ENCODE measurements at regions of chr6 and their contacts with region 1.

Region 1: GRCh38 chr6:153023977-153024708 is 21.6 kb upstream of the MTRF1L start:
- DNase-seq: peak; percentile 84
- H3K4me3 Mint-ChIP-seq: no peak overlapping the region
- H3K27ac Mint-ChIP-seq: no peak overlapping the region
- H3K4me1 Mint-ChIP-seq: no peaks in the 10 kb centered on the region
- H3K27me3 Mint-ChIP-seq: peaks cover 35% of the 10 kb centered on the region

Region 2: GRCh38 chr6:152748843-152749242 is 275.3 kb before region 1 on chr6:
- intact Hi-C with region 1: loop called (anchors 10 kb)
- DNase-seq: no peak
- H3K4me3 Mint-ChIP-seq: no peak overlapping the region
- H3K27ac Mint-ChIP-seq: no peak overlapping the region
- H3K4me1 Mint-ChIP-seq: no peaks in the 10 kb centered on the region
- H3K27me3 Mint-ChIP-seq: no peaks in the 10 kb centered on the region

Region 3: DNA sequence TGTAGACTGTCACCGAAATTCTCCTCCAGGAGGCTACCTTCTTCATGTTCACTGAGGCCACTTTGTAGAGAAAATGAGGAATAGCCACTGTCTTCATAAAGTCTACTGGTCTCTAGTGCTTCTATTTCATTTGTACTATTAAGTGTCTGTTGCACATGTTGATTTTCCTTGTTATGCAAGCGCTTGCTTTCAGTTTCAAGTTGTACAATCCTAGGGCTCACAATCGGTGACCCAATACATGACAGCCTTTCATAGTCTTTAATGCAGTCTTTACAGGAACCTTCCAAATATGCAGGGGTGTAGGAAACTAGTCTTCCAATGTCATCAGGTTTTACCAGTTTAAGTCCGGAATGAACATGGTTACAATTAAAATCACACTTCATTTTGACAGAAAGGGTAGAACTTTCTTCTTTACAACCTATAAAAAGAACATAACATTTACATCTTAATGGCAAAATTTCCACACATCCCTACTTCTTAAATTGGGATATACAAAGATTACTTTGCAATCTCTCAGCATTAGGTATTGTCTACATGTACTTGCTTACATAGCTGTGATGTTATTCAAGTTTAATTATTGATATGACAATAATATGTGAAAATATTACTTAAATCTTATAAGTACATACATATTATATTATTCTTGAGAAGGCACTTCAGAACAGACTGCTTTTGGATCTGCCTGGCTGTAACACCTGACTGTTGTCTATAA is 48.8 kb before region 1 on chr6:
- intact Hi-C with region 1: no loop called
- DNase-seq: peak; percentile 73
- H3K4me3 Mint-ChIP-seq: peak overlapping the region; percentile 78
- H3K27ac Mint-ChIP-seq: peak overlapping the region; percentile 76
- H3K4me1 Mint-ChIP-seq: peaks cover 55% of the 10 kb centered on the region
- H3K27me3 Mint-ChIP-seq: no peaks in the 10 kb centered on the region

Region 4: DNA sequence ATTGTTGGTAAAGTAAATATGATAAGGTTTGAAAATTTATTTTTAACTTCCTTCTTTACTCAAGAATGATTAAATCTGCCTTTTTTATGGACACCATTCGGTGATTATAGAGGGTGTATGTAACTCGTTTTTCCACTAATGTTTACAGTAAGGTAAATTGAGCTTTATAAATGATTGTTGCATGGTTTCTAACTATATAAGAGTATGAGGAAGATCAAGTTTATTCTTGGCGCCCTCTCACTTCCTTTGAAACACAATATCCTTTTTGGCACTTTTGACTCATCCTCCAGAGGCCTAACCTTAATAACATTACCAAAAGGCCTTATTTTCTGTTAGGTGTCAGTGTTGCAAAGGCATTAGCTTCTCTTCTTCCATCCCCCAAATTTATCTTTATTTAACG is 20.2 kb after region 1 on chr6:
- intact Hi-C with region 1: no loop called
- DNase-seq: no peak
- H3K4me3 Mint-ChIP-seq: no peak overlapping the region
- H3K27ac Mint-ChIP-seq: no peak overlapping the region
- H3K4me1 Mint-ChIP-seq: no peaks in the 10 kb centered on the region
- H3K27me3 Mint-ChIP-seq: peaks cover 5% of the 10 kb centered on the region

Measured in activated CD4-positive, alpha-beta T cell treated with anti-CD3 and anti-CD28 coated beads, Interleukin-2, amount 10 ng/mL, durations not matched to agents 24 days and 14 days (primary cell).